ENCODE measurements at regions of chr20 and their contacts with region 1.

Region 1: DNA sequence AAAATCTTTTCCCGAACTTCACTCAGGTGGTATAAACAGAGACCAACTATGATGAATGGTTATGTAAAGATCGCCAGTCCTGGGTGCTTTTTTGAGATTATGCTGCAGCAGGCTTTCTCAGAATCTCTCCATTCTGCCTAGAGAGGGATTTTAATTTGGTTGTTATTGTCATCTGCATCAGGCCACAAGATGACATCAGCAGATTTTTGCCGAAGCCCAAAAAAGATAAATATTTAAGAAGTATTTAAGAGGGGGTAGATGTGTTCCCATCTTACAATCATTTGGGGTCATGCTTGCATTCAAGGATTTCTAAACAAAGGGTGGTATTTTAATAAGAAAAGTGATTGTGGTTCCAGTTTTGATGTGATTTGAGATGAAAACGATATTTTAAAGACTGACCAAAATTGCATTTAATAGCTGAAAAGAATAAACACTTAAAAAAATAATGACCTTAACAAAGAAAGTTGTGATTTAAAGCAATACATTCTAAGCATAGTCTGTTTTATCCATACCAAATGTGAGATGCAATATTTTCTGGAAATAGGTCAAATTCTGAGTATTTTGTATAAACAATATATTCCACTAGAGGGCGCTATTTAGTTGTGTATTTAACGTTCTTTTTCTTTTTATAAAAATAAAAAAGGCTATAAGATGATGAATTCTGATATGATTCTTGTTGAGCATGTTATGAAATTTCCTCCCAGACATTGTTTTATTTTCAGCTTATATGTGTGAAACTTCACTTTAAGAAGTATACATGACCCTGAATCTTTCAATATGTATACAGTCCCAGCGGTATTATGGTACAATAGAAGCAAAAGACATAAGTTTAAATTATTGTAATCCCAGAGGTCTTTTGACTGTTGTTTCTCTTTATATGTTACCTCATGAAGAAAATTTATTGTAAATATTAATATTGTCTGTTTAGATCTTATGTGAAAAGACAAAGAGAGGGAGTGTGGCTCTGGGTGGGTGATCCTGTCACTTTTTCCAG is 51.0 kb upstream of the ZFP64 start:
- DNase-seq: peak in 2 of 9 experiments; percentile 16 to 30
- ATAC-seq: no peak
- H3K4me3 ChIP-seq: no peak overlapping the region
- H3K4me3 Mint-ChIP-seq: no peak overlapping the region
- H3K27ac ChIP-seq: no peak overlapping the region
- H3K27ac Mint-ChIP-seq: no peak overlapping the region
- H3K4me1 ChIP-seq: no peaks in the 10 kb centered on the region
- H3K4me1 Mint-ChIP-seq: no peaks in the 10 kb centered on the region
- H3K27me3 ChIP-seq: no peaks in the 10 kb centered on the region
- H3K27me3 Mint-ChIP-seq: peaks cover 10% of the 10 kb centered on the region
- CTCF ChIP-seq: peak; percentile 84

Region 2: GRCh38 chr20:52305858-52306257 is 63.3 kb after region 1 on chr20:
- CTCF ChIA-PET with region 1: no interaction called
- POLR2A ChIA-PET with region 1: interaction called, 3 read pairs
- intact Hi-C with region 1: loop called in 1 of 2 experiments (anchors 5 kb)
- DNase-seq: peak in 7 of 9 experiments; percentile 4 to 68 (median 35)
- ATAC-seq: peak; percentile 77
- H3K4me3 ChIP-seq: no peak overlapping the region
- H3K4me3 Mint-ChIP-seq: peak overlapping the region; percentile 0
- H3K27ac ChIP-seq: peak overlapping the region in 1 of 2 experiments; percentile 25
- H3K27ac Mint-ChIP-seq: peak overlapping the region; percentile 86
- H3K4me1 ChIP-seq: peaks cover 41% of the 10 kb centered on the region
- H3K4me1 Mint-ChIP-seq: peaks cover 43% of the 10 kb centered on the region
- H3K27me3 ChIP-seq: peaks cover 0 to 2% of the 10 kb centered on the region in 2 experiments
- H3K27me3 Mint-ChIP-seq: no peaks in the 10 kb centered on the region
- CTCF ChIP-seq: no peak

Region 3: GRCh38 chr20:52379723-52380336 is 137.3 kb after region 1 on chr20:
- CTCF ChIA-PET with region 1: no interaction called
- POLR2A ChIA-PET with region 1: no interaction called
- intact Hi-C with region 1: loop called (anchors 1 to 2 kb)
- DNase-seq: peak in 7 of 9 experiments; percentile 5 to 62 (median 43)
- ATAC-seq: no peak
- H3K4me3 ChIP-seq: no peak overlapping the region
- H3K4me3 Mint-ChIP-seq: no peak overlapping the region
- H3K27ac ChIP-seq: no peak overlapping the region
- H3K27ac Mint-ChIP-seq: no peak overlapping the region
- H3K4me1 ChIP-seq: peaks cover 13% of the 10 kb centered on the region
- H3K4me1 Mint-ChIP-seq: peaks cover 19% of the 10 kb centered on the region
- H3K27me3 ChIP-seq: no peaks in the 10 kb centered on the region
- H3K27me3 Mint-ChIP-seq: no peaks in the 10 kb centered on the region
- CTCF ChIP-seq: peak; percentile 95

Region 4: GRCh38 chr20:52438324-52438963 is 195.9 kb after region 1 on chr20:
- CTCF ChIA-PET with region 1: no interaction called
- POLR2A ChIA-PET with region 1: no interaction called
- intact Hi-C with region 1: loop called (anchors 5 kb)
- DNase-seq: peak in 2 of 9 experiments; percentile 46 to 60
- ATAC-seq: no peak
- H3K4me3 ChIP-seq: no peak overlapping the region
- H3K4me3 Mint-ChIP-seq: no peak overlapping the region
- H3K27ac ChIP-seq: no peak overlapping the region
- H3K27ac Mint-ChIP-seq: no peak overlapping the region
- H3K4me1 ChIP-seq: no peaks in the 10 kb centered on the region
- H3K4me1 Mint-ChIP-seq: peaks cover 9% of the 10 kb centered on the region
- H3K27me3 ChIP-seq: no peaks in the 10 kb centered on the region
- H3K27me3 Mint-ChIP-seq: no peaks in the 10 kb centered on the region
- CTCF ChIP-seq: no peak

Region 5: DNA sequence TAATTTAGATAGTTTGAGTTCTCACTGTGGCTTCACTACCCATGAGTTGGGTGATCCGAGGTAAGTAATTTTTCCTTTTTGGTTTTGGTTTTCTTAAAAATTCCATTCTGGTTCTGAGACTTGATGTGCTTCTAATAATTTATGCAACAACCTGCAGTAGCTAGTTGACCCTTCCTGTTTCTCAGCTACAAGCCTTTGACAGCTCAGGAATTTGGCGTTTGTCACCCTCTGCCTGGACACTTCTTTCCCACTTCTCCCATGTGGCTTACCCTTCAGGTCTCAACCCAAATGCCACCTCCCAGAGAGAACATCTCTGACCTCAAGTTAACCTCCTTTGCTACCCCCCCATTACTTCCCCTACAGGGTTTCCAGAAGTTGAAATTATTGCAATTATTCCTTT is 679.9 kb after region 1 on chr20:
- CTCF ChIA-PET with region 1: no interaction called
- POLR2A ChIA-PET with region 1: no interaction called
- intact Hi-C with region 1: no loop called
- DNase-seq: no peak
- ATAC-seq: no peak
- H3K4me3 ChIP-seq: no peak overlapping the region
- H3K4me3 Mint-ChIP-seq: no peak overlapping the region
- H3K27ac ChIP-seq: no peak overlapping the region
- H3K27ac Mint-ChIP-seq: no peak overlapping the region
- H3K4me1 ChIP-seq: no peaks in the 10 kb centered on the region
- H3K4me1 Mint-ChIP-seq: no peaks in the 10 kb centered on the region
- H3K27me3 ChIP-seq: no peaks in the 10 kb centered on the region
- H3K27me3 Mint-ChIP-seq: peaks cover 17% of the 10 kb centered on the region
- CTCF ChIP-seq: no peak

Region 6: DNA sequence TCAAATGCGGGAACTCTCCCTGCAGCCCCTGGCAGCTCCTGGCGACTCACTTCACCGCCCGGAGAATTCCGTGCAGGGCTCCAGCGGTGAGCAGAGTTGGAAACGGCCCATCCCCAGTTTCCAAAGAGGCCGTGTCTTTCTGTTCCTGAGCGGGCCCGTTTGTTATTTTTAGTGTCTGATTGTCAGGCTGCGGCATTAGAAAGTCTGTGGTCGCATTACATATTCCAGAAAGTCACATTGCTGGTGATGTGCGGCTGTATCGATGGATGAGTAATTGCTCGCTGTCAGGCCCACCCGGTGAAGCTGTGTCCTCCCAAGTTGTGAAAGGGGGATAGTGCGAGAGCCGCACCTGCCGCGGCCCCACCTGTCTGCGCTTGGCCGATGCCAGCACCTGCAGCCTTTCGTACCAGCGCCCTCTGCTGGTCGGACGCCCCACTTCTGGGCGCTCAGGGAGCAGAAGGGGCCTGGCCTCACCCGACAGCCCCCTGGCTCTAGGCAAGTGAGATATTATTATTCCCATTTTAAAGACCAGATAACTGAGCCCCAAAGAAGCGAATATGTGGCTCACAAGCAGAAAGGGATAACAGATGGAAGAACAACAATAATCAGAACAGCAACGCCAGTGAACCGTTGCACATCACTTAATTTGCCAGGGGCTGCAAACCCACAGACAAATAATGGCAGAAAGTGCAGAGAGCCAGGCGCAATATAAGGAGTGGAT is 974.5 kb after region 1 on chr20:
- CTCF ChIA-PET with region 1: interaction called, 3 read pairs
- POLR2A ChIA-PET with region 1: no interaction called
- intact Hi-C with region 1: loop called in 1 of 2 experiments (anchors 1 kb)
- DNase-seq: peak; percentile 72 to 92 (median 80)
- ATAC-seq: peak; percentile 89
- H3K4me3 ChIP-seq: peak overlapping the region in 1 of 2 experiments; percentile 13
- H3K4me3 Mint-ChIP-seq: peak overlapping the region; percentile 60
- H3K27ac ChIP-seq: no peak overlapping the region
- H3K27ac Mint-ChIP-seq: no peak overlapping the region
- H3K4me1 ChIP-seq: peaks cover 22% of the 10 kb centered on the region
- H3K4me1 Mint-ChIP-seq: peaks cover 18% of the 10 kb centered on the region
- H3K27me3 ChIP-seq: no peaks in the 10 kb centered on the region
- H3K27me3 Mint-ChIP-seq: peaks cover 11% of the 10 kb centered on the region
- CTCF ChIP-seq: peak; percentile 97

Region 7: DNA sequence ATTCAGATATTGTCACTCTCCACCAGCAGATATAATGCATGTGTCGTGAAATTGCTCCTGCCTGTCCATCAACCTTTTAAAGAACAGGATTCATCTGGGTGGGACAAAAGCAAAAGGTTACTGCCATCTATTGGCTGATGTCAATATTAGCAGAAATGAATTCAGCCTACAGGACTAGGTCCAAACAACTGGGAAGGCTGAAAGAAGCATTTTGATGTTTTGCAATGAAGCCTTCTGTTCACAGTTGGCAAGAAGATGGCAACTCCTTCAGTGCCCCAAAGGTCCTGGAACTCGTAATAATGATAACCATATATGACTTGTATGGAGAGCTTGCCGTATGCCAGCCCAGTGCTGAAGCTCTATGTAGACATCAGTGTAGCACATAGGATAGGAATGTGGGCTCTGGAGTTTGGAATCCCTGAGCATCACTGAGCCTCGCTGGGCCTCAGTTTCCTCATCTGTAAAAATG is 1820.3 kb after region 1 on chr20:
- CTCF ChIA-PET with region 1: interaction called, 3 read pairs
- POLR2A ChIA-PET with region 1: no interaction called
- intact Hi-C with region 1: loop called in 1 of 2 experiments (anchors 5 kb)
- DNase-seq: peak in 2 of 9 experiments; percentile 40 to 60
- ATAC-seq: no peak
- H3K4me3 ChIP-seq: no peak overlapping the region
- H3K4me3 Mint-ChIP-seq: no peak overlapping the region
- H3K27ac ChIP-seq: no peak overlapping the region
- H3K27ac Mint-ChIP-seq: no peak overlapping the region
- H3K4me1 ChIP-seq: peaks cover 24% of the 10 kb centered on the region
- H3K4me1 Mint-ChIP-seq: no peaks in the 10 kb centered on the region
- H3K27me3 ChIP-seq: no peaks in the 10 kb centered on the region
- H3K27me3 Mint-ChIP-seq: no peaks in the 10 kb centered on the region
- CTCF ChIP-seq: peak; percentile 53